ENCODE measurements at regions of chr7 and their contacts with region 1.

Region 1: GRCh38 chr7:11427686-11428273 is 404.2 kb downstream of the THSD7A start:
- H3K4me3 Mint-ChIP-seq: no peak overlapping the region
- H3K27ac Mint-ChIP-seq: no peak overlapping the region
- H3K4me1 Mint-ChIP-seq: peaks cover 17% of the 10 kb centered on the region
- H3K27me3 Mint-ChIP-seq: no peaks in the 10 kb centered on the region

Region 2: GRCh38 chr7:11474902-11475585 is 47.3 kb after region 1 on chr7:
- intact Hi-C with region 1: no loop called
- H3K4me3 Mint-ChIP-seq: no peak overlapping the region
- H3K27ac Mint-ChIP-seq: no peak overlapping the region
- H3K4me1 Mint-ChIP-seq: peaks cover 7% of the 10 kb centered on the region
- H3K27me3 Mint-ChIP-seq: no peaks in the 10 kb centered on the region

Region 3: GRCh38 chr7:11557627-11558026 is 129.8 kb after region 1 on chr7:
- intact Hi-C with region 1: loop called (anchors 10 kb)
- H3K4me3 Mint-ChIP-seq: no peak overlapping the region
- H3K27ac Mint-ChIP-seq: no peak overlapping the region
- H3K4me1 Mint-ChIP-seq: peaks cover 16% of the 10 kb centered on the region
- H3K27me3 Mint-ChIP-seq: no peaks in the 10 kb centered on the region

Region 4: GRCh38 chr7:12067141-12067831 is 639.5 kb after region 1 on chr7:
- intact Hi-C with region 1: loop called (anchors 5 kb)
- H3K4me3 Mint-ChIP-seq: no peak overlapping the region
- H3K27ac Mint-ChIP-seq: peak overlapping the region; percentile 51
- H3K4me1 Mint-ChIP-seq: peaks cover 20% of the 10 kb centered on the region
- H3K27me3 Mint-ChIP-seq: no peaks in the 10 kb centered on the region

Region 5: DNA sequence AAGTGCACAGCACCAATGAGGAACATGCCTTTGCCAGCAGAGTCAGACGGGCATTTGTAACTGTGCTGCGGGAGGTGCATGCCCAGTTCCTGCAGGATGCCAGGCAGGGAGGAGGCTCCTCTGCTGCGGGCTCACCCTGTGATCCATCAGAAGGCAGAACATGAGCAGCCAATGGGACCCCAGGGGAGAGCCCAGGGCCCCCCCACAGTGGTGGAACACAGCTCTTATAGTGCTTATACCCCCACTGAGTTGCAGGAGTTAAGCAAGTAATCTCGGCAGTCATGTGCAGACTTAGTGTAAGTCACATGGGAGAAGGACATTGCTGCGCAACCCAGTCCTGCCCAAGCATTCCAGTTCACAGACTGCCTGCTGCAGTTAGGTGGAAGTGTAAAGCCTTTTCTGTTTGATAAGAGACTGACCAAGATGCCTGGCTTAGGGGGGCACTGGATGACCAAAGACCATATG is 663.0 kb after region 1 on chr7:
- intact Hi-C with region 1: no loop called
- H3K4me3 Mint-ChIP-seq: no peak overlapping the region
- H3K27ac Mint-ChIP-seq: no peak overlapping the region
- H3K4me1 Mint-ChIP-seq: no peaks in the 10 kb centered on the region
- H3K27me3 Mint-ChIP-seq: no peaks in the 10 kb centered on the region

Region 6: GRCh38 chr7:12244129-12244528 is 816.3 kb after region 1 on chr7:
- intact Hi-C with region 1: loop called (anchors 5 kb)
- H3K4me3 Mint-ChIP-seq: no peak overlapping the region
- H3K27ac Mint-ChIP-seq: no peak overlapping the region
- H3K4me1 Mint-ChIP-seq: peaks cover 6% of the 10 kb centered on the region
- H3K27me3 Mint-ChIP-seq: no peaks in the 10 kb centered on the region

Region 7: GRCh38 chr7:12322284-12322902 is 894.6 kb after region 1 on chr7:
- intact Hi-C with region 1: loop called (anchors 2 kb)
- H3K4me3 Mint-ChIP-seq: no peak overlapping the region
- H3K27ac Mint-ChIP-seq: no peak overlapping the region
- H3K4me1 Mint-ChIP-seq: no peaks in the 10 kb centered on the region
- H3K27me3 Mint-ChIP-seq: peaks cover 4% of the 10 kb centered on the region

Region 8: GRCh38 chr7:12490117-12490688 is 1062.4 kb after region 1 on chr7:
- intact Hi-C with region 1: loop called (anchors 5 kb)
- H3K4me3 Mint-ChIP-seq: no peak overlapping the region
- H3K27ac Mint-ChIP-seq: no peak overlapping the region
- H3K4me1 Mint-ChIP-seq: no peaks in the 10 kb centered on the region
- H3K27me3 Mint-ChIP-seq: no peaks in the 10 kb centered on the region

Measured in dendritic cell treated with granulocyte-macrophage colony-stimulating factor and Interleukin-4, amounts not matched to agents 40 ng/mL and 50 ng/mL, for 4 days (primary cell).